Aorta (tissue), 5 donors: ENCODE measurements at regions of chr2 and their contacts with region 1.

Region 1: DNA sequence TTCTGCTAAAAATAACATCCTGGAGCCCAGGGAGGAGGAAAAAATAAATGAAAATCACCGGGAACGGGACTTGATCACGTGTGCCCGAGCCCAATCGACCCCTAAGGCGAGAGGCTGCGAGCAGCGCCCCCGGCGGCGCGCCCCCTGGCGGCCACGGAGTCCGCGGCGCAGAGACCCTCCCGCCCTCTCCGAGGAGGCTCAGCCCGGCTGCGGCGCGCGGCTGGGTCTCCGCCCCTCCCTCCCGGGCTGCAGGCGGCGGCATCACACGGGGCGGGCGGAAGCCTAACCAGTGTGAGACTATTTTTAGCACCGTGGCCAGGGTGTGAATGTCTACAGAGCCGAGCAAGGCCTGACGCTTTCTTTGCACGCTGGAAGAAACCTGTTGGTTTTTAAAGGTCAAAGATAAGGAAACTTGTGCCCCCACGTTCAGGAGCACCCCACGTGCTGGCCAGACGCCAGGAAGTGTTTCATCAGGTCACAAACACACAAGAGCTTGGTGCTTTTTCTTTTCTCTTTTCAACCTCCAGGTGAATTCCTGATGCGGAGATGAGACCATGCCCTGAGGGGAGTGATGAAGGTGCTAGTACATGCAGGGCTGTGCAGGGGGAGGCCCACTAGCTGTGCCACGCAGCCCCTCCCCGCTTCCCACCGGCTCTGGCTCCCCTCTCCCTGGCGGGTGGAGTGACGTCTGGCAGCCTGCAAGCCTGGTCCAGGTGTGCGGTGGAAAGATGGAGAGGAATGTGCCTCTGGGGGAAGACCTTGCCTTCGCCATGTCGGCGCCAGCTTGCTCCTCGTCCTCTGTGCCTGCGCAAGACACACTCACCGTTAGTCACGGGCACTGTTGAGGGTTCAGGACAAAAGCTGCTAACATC is 35.3 kb upstream of the DNMT3A start:
- DNase-seq: peak; percentile 93 to 94
- ATAC-seq: peak; percentile 93
- H3K4me3 ChIP-seq: no peak overlapping the region
- H3K27ac ChIP-seq: no peak overlapping the region
- H3K4me1 ChIP-seq: no peaks in the 10 kb centered on the region
- H3K27me3 ChIP-seq: no peaks in the 10 kb centered on the region

Region 2: GRCh38 chr2:25237764-25238163 is 139.2 kb before region 1 on chr2:
- intact Hi-C with region 1: no loop called
- DNase-seq: no peak
- ATAC-seq: no peak
- H3K4me3 ChIP-seq: no peak overlapping the region
- H3K27ac ChIP-seq: no peak overlapping the region
- H3K4me1 ChIP-seq: no peaks in the 10 kb centered on the region
- H3K27me3 ChIP-seq: no peaks in the 10 kb centered on the region

Region 3: DNA sequence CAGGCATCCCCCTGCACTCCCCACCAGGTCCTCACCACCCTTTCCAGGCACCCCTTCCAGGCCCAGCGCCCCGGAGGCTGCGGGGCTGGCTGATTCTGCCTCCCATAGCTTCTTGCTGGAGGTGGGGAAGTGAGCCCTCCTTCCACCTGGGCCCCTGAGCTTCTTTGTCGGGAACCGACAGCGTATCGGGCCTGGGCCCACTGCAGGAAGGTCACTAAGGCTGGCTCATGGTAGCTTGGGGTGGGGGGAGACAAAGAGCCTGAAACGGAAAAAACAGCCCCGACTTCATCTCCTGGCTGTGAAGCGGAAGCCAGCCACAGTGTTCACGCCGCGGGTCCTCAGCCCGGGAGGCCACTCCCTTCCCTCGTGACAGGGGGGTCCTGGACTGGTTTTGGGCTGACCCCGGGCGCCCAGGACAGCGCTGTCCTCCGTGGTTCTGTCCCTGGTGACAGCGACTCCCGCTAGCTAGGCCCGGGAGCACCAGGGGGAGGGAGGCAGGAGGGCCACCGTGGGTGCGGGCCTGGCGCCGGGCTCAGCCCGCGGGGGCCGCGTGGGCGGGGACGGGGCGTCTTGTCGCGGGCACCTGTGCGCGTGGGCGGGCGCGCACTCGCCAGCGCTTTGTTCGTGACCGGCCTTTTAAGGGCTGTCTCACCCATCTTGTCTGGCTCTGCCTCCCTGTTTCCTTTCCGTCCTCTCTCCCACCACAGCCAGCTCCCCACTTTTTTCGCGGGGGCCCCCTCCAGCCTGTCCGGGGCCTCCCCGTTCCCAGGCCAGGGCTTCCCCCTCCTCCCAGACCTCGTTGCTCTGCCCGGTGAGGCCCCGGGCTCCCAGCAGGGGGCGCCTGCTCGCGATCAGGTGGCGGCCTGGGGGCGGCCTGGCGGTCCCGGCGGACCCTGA is 100.2 kb before region 1 on chr2:
- intact Hi-C with region 1: loop called in 1 of 2 experiments (anchors 5 kb)
- DNase-seq: peak; percentile 86 to 93
- ATAC-seq: peak; percentile 73
- H3K4me3 ChIP-seq: peak overlapping the region; percentile 1 to 52
- H3K27ac ChIP-seq: peak overlapping the region; percentile 14 to 52
- H3K4me1 ChIP-seq: no peaks in the 10 kb centered on the region
- H3K27me3 ChIP-seq: no peaks in the 10 kb centered on the region

Region 4: GRCh38 chr2:25342372-25343186 is 34.4 kb before region 1 on chr2:
- intact Hi-C with region 1: loop called in 1 of 2 experiments (anchors 2 kb)
- DNase-seq: peak; percentile 90 to 94
- ATAC-seq: peak; percentile 92
- H3K4me3 ChIP-seq: peak overlapping the region; percentile 87 to 96
- H3K27ac ChIP-seq: peak overlapping the region in 1 of 2 donors; percentile 42
- H3K4me1 ChIP-seq: no peaks in the 10 kb centered on the region
- H3K27me3 ChIP-seq: no peaks in the 10 kb centered on the region

Region 5: DNA sequence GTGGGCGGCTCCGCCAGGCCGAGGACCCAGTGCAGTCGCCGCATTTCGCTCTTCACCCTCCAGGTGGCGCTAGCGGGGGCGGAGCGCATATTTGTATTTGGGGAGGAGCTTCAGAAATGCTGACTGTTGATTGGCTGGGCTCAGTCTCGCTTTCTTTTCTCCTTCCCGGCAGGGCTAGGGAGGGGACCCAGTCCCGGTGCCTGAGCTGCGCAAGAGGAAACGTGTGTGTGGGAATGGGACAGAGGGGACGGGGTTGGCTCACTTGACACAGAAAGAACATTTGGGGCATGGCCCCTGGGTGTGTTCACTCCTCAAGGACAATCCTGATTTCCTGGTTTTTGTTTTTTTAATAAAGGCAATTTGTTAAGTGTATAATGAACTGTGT is 14.9 kb before region 1 on chr2:
- intact Hi-C with region 1: loop called in 1 of 2 experiments (anchors 1 kb)
- DNase-seq: peak; percentile 93 to 97
- ATAC-seq: peak; percentile 98
- H3K4me3 ChIP-seq: peak overlapping the region in 1 of 2 donors; percentile 32
- H3K27ac ChIP-seq: no peak overlapping the region
- H3K4me1 ChIP-seq: no peaks in the 10 kb centered on the region
- H3K27me3 ChIP-seq: no peaks in the 10 kb centered on the region

Region 6: DNA sequence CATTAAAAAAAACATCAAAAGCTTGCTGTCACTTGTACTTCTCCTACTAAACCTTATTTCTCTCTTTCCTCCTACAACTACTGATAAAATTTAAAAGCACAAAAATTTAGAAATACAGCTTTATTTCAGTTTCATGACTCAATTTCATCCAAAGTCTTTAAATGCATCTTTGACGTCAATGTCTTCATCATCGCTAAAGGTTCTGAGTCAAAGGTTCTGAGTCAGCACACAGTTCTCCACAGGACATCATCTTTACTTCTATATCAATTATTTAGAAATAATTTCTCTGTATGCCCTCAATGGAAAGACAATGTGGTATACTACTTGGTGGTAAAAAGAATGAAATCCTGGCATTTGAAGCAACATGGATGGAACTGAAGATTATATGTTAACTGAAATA is 128.6 kb after region 1 on chr2:
- intact Hi-C with region 1: no loop called
- DNase-seq: no peak
- ATAC-seq: no peak
- H3K4me3 ChIP-seq: no peak overlapping the region
- H3K27ac ChIP-seq: no peak overlapping the region
- H3K4me1 ChIP-seq: no peaks in the 10 kb centered on the region
- H3K27me3 ChIP-seq: no peaks in the 10 kb centered on the region

Region 7: GRCh38 chr2:25521665-25522387 is 144.8 kb after region 1 on chr2:
- intact Hi-C with region 1: loop called in 1 of 2 experiments (anchors 10 kb)
- DNase-seq: no peak
- ATAC-seq: peak; percentile 84
- H3K4me3 ChIP-seq: peak overlapping the region; percentile 14 to 69
- H3K27ac ChIP-seq: no peak overlapping the region
- H3K4me1 ChIP-seq: no peaks in the 10 kb centered on the region
- H3K27me3 ChIP-seq: no peaks in the 10 kb centered on the region